Pancreas (tissue), 10 donors: ENCODE measurements at regions of chr10 and their contacts with region 1.

Region 1: DNA sequence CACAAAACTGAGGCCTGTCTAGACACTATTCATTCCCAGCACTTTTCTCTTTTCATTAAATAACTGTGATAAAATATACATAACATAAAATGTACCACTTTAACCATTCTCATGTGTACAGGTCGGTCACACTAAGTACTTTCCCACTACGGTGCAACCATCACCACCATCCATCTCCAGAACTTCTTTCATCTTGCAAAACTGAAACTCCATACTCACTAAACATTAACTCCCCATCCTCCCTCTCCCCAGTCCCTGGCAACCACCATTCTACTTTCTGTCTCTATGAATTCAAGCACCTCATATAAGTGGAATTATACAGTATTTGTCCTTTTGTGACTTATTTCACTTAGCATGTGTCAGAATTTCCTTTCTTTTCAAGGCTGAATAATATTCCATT is 53.0 kb downstream of the ARHGAP12 start:
- DNase-seq: no peak
- ATAC-seq: no peak
- H3K4me3 ChIP-seq: no peak overlapping the region
- H3K27ac ChIP-seq: no peak overlapping the region
- H3K4me1 ChIP-seq: peaks cover 0 to 17% (median 12%) of the 10 kb centered on the region in 3 donors
- H3K27me3 ChIP-seq: no peaks in the 10 kb centered on the region
- CTCF ChIP-seq: no peak

Region 2: GRCh38 chr10:31928549-31929260 is 53.1 kb after region 1 on chr10 and contains the start of gene ARHGAP12:
- intact Hi-C with region 1: loop called in 1 of 3 experiments (anchors 10 kb)
- DNase-seq: peak; percentile 88 to 98 (median 92)
- ATAC-seq: peak; percentile 85 to 93 (median 92)
- H3K4me3 ChIP-seq: peak within 1 kb of the TSS; percentile 72 to 90 (median 81)
- H3K27ac ChIP-seq: peak within 1 kb of the TSS; percentile 94 to 99 (median 97)
- H3K4me1 ChIP-seq: peaks cover 13 to 31% (median 30%) of the 10 kb centered on the region in 3 donors
- H3K27me3 ChIP-seq: no peaks in the 10 kb centered on the region
- CTCF ChIP-seq: no peak
- total RNA-seq, gene ARHGAP12: 16.3 to 27.0 (median 21.3) TPM